Tibial artery (tissue), 4 donors: ENCODE measurements at regions of chr17 and their contacts with region 1.

Region 1: DNA sequence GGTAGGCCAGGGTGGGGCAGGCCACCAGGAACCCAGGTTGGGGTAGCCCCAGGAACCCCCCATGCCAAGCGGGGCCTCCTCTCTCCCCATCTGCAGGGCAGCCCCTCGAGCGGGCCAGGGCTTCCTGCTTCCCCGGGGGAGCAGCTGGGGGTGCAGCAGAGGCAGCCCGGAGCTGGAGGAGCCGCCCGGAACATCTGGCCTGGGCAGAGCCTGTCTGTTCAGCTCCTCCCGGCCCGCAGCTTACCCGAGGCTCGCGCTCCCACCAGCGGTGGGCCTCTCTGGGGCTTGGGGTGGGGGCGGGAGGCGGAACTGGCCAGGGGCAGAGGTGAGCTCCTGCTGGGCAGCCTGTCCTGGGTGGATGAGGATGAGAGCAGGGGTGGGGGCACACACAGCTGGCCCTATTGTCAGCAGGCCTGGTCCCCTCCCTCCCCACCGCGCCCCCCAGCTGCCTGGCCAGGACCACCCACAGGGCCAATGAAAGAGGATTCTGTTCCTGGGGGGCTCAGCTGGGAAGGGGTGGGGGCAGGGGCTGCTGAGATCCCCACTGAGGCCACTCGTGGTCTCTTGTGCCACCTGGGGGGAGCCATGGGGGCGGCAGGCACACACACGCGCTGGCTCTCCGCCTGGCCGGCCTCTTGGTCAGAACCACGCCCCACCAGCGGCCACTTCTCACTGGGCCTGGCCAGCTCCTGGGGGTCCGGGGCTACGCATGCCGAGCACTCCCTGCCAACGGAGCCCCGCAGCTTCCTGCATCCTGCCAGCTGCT is 34.7 kb downstream of the BAHCC1 start:
- DNase-seq: no peak
- H3K4me3 ChIP-seq: peak overlapping the region; percentile 9 to 35
- H3K27ac ChIP-seq: peak overlapping the region; percentile 42 to 70
- H3K4me1 ChIP-seq: peaks cover 8 to 67% (median 59%) of the 10 kb centered on the region in 4 donors
- H3K27me3 ChIP-seq: no peaks in the 10 kb centered on the region
- CTCF ChIP-seq: no peak

Region 2: DNA sequence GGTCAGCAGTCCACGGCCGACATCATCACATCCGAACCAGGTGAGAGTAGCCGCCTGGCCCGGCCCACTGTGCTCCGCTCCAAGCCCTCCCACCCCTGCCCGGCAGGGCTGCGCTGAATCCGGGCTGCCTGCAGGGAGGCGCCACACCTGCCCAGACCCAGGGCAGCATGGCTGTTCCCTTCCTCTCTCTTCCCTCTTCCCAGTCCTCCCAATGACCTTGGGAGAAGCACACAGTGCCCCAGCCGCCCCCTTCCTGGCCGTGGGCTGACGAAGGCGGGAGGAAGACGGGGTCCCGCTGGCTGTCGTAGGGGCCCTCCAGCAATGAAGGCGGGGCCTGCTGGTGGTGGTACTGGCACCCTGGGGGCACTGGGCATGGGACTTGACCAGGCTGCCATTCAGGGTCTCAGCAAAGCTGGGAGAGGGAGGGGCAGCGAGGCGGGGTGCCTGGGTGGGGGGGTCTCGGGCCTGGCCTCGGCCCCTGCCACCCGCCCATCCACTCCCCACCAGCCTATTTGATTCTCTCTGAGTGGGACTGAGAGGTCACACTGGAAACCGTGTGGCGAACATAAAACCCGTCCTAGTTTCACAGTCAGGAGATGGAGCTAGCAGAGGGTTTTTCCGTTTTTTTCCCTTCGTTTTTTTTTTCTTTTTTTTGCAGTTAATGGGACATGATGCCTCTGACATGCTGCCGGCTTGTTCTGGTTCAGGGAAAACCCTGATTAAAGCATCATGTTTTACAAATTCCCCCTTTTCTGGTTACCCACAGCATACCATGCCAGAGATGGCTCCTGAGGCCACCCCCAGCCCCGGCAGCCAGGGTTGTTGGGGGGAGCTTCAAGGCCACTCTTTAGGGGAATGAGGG is 15.9 kb after region 1 on chr17:
- intact Hi-C with region 1: no loop called
- DNase-seq: no peak
- H3K4me3 ChIP-seq: no peak overlapping the region
- H3K27ac ChIP-seq: no peak overlapping the region
- H3K4me1 ChIP-seq: no peaks in the 10 kb centered on the region
- H3K27me3 ChIP-seq: no peaks in the 10 kb centered on the region
- CTCF ChIP-seq: no peak

Region 3: DNA sequence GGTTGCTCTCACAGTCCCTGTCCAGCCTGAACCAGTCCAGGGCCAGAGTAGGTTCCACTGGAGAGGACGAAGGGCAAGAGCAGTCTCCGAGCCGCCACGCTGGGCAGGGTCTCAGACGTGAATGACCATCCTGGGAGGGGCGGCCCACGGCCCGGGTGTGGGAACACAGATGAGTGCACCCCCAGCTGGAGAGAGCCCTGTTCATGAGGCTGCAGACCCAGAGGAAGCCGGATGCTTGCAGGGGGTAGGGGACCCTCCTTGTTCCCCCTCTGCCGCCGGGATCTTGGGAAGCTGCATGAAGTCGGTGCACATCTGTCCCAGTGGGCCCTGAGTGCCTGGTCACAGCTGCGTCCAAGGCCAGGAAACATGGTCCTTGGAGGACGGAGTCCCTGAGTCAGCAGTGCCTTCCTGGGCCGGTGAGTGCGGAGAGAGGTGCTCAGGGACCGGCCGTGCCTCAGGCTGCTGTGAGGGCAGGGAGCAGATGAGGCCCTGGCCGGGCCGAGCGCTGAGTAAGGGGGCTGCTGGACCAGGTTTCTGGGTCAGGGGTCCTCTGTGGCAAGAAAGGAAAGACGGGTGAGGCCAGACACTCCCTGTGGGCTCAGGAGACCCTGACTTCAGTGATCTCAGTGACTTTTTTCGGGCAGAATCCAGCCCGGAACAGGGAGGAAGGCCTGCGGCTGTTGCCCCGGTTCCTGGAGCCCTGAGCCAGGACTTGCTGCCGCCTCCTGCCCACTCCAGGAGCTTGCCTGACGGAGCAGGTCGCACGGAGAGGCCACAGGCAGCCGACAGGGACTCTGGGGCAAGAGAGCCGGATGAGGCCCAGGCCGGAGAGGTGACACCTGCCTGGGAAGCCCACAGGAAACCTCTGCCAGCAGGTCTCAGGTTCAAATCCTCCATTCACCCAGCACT is 36.8 kb after region 1 on chr17:
- intact Hi-C with region 1: loop called (anchors 5 kb)
- DNase-seq: no peak
- H3K4me3 ChIP-seq: no peak overlapping the region
- H3K27ac ChIP-seq: no peak overlapping the region
- H3K4me1 ChIP-seq: peaks cover 0 to 5% (median 2%) of the 10 kb centered on the region in 4 donors
- H3K27me3 ChIP-seq: no peaks in the 10 kb centered on the region
- CTCF ChIP-seq: no peak

Region 4: DNA sequence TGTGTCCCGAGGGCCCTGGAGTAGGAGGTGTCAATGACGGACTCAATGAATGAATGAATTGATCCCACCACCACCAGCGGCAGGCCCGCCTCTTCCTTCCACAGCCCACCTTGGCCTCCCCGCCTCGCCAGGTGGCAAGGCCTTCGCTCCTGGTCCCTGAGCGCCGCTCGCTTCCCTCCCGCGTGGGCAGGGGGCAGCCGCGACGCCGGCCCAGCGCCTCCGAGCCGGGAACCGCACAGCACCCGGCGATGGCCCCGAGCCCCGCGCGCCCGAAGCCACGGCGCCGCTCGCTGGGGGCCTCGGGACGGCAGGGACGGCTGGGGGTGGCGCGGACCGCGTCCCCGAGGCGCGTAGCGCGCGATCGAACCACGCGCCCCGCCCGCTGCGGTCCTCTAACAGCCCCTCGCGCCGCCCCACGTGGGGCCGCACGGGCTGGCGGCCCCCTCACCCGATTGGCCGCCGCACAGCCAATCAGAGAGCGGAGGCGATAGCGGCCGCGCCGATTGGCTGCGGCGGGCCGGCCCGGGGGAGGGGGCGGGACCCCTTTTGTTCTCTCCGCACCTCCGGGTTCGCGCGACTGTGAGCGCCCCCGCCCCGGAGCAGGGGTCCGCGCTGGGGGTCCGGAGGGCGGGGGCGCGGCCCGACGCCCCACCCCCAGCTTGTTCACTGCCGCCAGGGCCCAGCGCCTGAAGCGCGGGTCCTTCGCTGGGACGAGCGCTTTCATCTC is 51.3 kb after region 1 on chr17:
- intact Hi-C with region 1: no loop called
- DNase-seq: peak; percentile 66 to 84
- H3K4me3 ChIP-seq: peak overlapping the region; percentile 47 to 58
- H3K27ac ChIP-seq: no peak overlapping the region
- H3K4me1 ChIP-seq: peaks cover 0 to 41% (median 35%) of the 10 kb centered on the region in 4 donors
- H3K27me3 ChIP-seq: peaks cover 0 to 7% of the 10 kb centered on the region in 2 donors
- CTCF ChIP-seq: no peak